CD4-positive, alpha-beta memory T cell (primary cell): ENCODE measurements at regions of chr19 and their contacts with region 1.

Region 1: GRCh38 chr19:42325273-42325895 is at the start of gene MEGF8:
- DNase-seq: peak; percentile 97 to 99 (median 99)
- H3K4me3 ChIP-seq: peak within 1 kb of the TSS; percentile 66 to 90
- H3K4me3 Mint-ChIP-seq: peak within 1 kb of the TSS; percentile 89 to 95 (median 92)
- H3K27ac ChIP-seq: peak within 1 kb of the TSS; percentile 81
- H3K27ac Mint-ChIP-seq: peak within 1 kb of the TSS; percentile 85 to 91 (median 90)
- H3K4me1 ChIP-seq: peaks cover 19% of the 10 kb centered on the region
- H3K4me1 Mint-ChIP-seq: peaks cover 7 to 31% (median 20%) of the 10 kb centered on the region in 4 donors
- H3K27me3 ChIP-seq: no peaks in the 10 kb centered on the region
- H3K27me3 Mint-ChIP-seq: peaks cover 5 to 12% of the 10 kb centered on the region in 2 donors
- total RNA-seq, gene MEGF8: 8.6 to 9.5 TPM

Region 2: DNA sequence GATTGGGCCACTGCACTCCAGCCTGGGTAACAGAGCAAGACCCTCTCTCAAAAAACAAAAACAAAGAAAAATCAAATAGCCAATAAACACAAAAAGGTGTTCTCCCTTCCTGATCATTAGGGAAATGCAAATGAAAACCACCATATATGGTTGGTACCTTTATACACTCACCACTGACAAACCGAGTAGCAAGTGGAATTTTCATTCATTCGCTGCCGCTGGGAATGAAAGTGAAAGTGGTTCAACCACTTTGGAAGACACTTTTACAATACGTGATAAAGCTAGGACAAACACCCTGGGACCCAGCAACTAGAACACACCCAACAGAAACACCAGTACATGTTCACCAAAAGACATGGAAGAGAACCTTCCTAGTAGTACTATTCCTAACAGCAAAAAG is 276.4 kb before region 1 on chr19:
- CTCF ChIA-PET with region 1: no interaction called
- POLR2A ChIA-PET with region 1: no interaction called
- intact Hi-C with region 1: no loop called
- DNase-seq: peak in 1 of 5 donors; percentile 13
- H3K4me3 ChIP-seq: no peak overlapping the region
- H3K4me3 Mint-ChIP-seq: peak overlapping the region; percentile 61 to 88 (median 74)
- H3K27ac ChIP-seq: no peak overlapping the region
- H3K27ac Mint-ChIP-seq: peak overlapping the region in 3 of 7 donors; percentile 33 to 89 (median 42)
- H3K4me1 ChIP-seq: no peaks in the 10 kb centered on the region
- H3K4me1 Mint-ChIP-seq: peaks cover 7 to 11% (median 7%) of the 10 kb centered on the region in 4 donors
- H3K27me3 ChIP-seq: no peaks in the 10 kb centered on the region
- H3K27me3 Mint-ChIP-seq: peaks cover 1 to 4% of the 10 kb centered on the region in 2 donors

Region 3: DNA sequence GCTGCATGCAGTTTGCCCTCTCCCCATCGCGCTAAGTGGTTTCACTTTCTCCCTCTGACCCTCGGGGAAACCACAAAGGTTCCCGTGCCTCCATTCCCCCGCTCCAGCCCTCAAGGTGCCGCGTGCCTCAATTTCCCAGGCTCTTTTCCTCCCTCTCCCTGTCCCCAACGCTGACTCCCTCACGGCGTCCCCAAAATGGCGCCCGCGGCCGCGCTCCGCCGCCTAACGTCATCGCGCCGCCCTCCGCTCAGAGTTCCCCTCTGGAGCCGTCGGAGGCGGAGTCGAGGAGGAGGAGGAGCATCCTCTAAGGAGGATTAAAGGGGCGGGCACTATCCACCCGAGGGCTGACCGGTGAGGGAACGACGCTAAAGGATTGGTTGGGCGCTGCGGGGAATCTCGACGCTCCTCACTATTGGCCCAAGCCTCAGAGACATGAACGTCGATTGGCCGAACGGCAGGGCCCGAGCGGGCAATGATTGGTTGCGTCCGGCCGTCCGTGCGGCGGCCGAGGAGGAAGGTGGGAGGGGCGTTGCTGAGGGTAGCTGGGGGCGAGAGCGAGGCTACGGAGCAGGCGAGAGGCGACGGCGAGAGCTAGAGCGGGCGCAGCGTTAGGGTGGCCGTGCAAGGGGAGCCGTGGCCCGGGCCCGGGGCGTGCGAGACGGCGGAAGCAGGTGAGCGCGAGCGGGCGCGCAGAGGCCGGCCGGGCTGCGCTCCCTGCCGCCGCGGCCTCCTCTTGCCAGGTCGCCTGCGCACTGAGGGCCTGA is 249.6 kb before region 1 on chr19 and contains the start of gene ZNF574:
- CTCF ChIA-PET with region 1: no interaction called
- POLR2A ChIA-PET with region 1: no interaction called
- intact Hi-C with region 1: loop called (anchors 1 kb)
- DNase-seq: peak; percentile 96 to 99 (median 99)
- H3K4me3 ChIP-seq: peak within 1 kb of the TSS; percentile 66 to 86
- H3K4me3 Mint-ChIP-seq: peak within 1 kb of the TSS; percentile 92 to 100 (median 98)
- H3K27ac ChIP-seq: peak within 1 kb of the TSS; percentile 95
- H3K27ac Mint-ChIP-seq: peak within 1 kb of the TSS; percentile 97 to 100 (median 100)
- H3K4me1 ChIP-seq: peaks cover 24% of the 10 kb centered on the region
- H3K4me1 Mint-ChIP-seq: peaks cover 29 to 38% (median 34%) of the 10 kb centered on the region in 4 donors
- H3K27me3 ChIP-seq: no peaks in the 10 kb centered on the region
- H3K27me3 Mint-ChIP-seq: no peaks in the 10 kb centered on the region
- total RNA-seq, gene ZNF574: 25.1 to 26.0 TPM

Region 4: DNA sequence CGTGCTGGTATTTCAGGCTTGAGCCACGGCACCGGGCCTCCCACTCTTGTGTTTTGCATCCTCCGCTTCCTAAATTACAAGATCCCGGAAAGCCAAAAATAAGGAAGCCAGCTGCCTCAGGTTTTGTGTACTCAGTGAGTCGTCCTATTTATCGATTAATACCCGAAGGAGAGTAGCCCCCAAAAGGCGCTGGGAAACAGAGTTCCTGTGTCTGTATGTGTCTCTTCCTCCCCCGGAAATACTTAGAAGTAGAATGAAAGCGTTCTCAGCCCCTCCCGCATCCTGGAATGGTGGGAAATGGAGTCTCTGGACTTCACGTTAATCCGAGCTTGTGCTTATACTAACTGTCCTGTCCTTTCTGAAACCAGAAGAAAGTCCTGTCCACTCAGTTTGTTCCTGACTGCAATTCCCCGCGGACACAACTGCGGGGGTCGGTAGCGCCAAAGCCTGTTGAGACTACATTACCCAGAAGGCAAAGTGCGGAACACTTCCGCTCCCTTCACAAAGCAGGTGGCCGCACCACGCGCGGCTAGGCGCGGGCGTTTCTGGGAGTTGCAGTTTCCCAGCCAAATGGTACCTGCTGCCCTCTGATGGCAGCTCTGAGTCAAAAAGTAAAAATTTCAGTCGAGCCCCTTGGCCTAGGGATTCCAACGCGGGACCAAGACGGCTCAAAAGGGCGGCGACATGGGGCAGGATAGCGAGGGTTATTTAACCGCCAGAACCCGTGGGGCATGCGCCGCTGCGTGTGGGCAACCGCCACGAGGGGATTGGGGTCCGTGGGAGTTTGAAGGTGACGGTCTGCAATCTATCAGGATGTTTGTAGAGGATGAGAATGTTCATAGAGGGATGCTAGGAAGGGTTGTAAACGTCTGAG is 80.8 kb before region 1 on chr19:
- CTCF ChIA-PET with region 1: no interaction called
- POLR2A ChIA-PET with region 1: interaction called, 3 read pairs
- intact Hi-C with region 1: loop called (anchors 1 kb)
- DNase-seq: peak; percentile 89 to 95 (median 91)
- H3K4me3 ChIP-seq: peak overlapping the region; percentile 53 to 89
- H3K4me3 Mint-ChIP-seq: peak overlapping the region; percentile 94 to 99 (median 97)
- H3K27ac ChIP-seq: peak overlapping the region; percentile 89
- H3K27ac Mint-ChIP-seq: peak overlapping the region; percentile 77 to 99 (median 99)
- H3K4me1 ChIP-seq: peaks cover 47% of the 10 kb centered on the region
- H3K4me1 Mint-ChIP-seq: peaks cover 26 to 62% (median 44%) of the 10 kb centered on the region in 4 donors
- H3K27me3 ChIP-seq: no peaks in the 10 kb centered on the region
- H3K27me3 Mint-ChIP-seq: no peaks in the 10 kb centered on the region

Region 5: GRCh38 chr19:42268704-42269477 is 56.5 kb before region 1 on chr19 and contains the start of gene CIC:
- CTCF ChIA-PET with region 1: interaction called, 4 read pairs
- POLR2A ChIA-PET with region 1: no interaction called
- intact Hi-C with region 1: loop called (anchors 1 kb)
- DNase-seq: peak; percentile 100
- H3K4me3 ChIP-seq: peak within 1 kb of the TSS; percentile 83 to 96
- H3K4me3 Mint-ChIP-seq: peak within 1 kb of the TSS in 4 of 8 donors; percentile 89 to 94 (median 92)
- H3K27ac ChIP-seq: peak within 1 kb of the TSS; percentile 99
- H3K27ac Mint-ChIP-seq: peak within 1 kb of the TSS in 4 of 7 donors; percentile 96 to 99 (median 98)
- H3K4me1 ChIP-seq: peaks cover 33% of the 10 kb centered on the region
- H3K4me1 Mint-ChIP-seq: peaks cover 0 to 29% (median 26%) of the 10 kb centered on the region in 4 donors
- H3K27me3 ChIP-seq: no peaks in the 10 kb centered on the region
- H3K27me3 Mint-ChIP-seq: no peaks in the 10 kb centered on the region
- total RNA-seq, gene CIC: 81.6 to 82.6 TPM

Region 6: GRCh38 chr19:42295831-42296525 is 29.4 kb before region 1 on chr19:
- CTCF ChIA-PET with region 1: interaction called, 10 read pairs
- POLR2A ChIA-PET with region 1: no interaction called
- intact Hi-C with region 1: no loop called
- DNase-seq: peak; percentile 78 to 89 (median 85)
- H3K4me3 ChIP-seq: no peak overlapping the region
- H3K4me3 Mint-ChIP-seq: peak overlapping the region in 1 of 8 donors; percentile 25
- H3K27ac ChIP-seq: peak overlapping the region; percentile 11
- H3K27ac Mint-ChIP-seq: peak overlapping the region in 6 of 7 donors; percentile 17 to 79 (median 73)
- H3K4me1 ChIP-seq: peaks cover 8% of the 10 kb centered on the region
- H3K4me1 Mint-ChIP-seq: peaks cover 3 to 22% (median 12%) of the 10 kb centered on the region in 4 donors
- H3K27me3 ChIP-seq: no peaks in the 10 kb centered on the region
- H3K27me3 Mint-ChIP-seq: no peaks in the 10 kb centered on the region

Region 7: DNA sequence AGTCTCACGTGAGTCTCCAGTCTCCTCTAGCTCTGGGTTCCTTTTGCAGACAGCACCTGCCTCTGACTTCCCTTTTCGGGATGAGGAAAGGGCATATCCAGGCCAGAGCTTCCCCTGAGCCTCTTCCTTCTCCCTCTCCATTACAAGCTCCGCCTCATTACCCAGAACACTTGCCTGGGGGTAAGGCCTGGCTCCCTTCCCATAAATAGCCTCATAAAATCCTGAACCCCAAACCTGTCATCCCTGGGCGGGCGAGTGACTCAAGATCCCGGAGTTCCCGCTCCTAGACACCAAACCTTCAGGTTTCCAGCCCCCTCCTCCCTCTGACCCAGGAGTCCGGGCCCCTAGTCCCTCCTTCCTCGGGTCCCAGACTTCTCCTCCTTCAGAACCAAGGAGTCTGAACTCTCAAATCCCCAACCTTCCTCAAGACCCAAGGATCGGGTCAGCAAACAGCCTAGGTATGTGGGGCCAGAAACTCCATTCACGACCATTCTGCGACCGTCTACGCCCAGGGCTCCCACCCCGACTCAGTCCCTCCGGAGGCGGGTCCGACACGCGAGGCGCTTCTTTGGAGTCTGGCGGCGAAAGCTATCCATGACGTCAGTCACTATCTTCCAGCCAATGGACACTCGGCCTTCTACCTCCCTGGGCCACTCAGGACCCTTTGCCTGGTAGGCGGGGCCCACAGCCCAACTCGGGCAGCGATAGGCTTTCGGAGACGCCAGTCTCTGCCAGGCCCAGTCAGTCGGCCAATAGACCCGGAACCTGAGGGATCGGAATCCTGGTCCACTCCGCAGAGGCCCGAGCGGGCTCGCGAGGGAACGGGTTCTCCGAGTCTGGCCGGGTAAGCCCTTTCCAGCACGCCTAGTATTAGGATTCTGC is 71.2 kb after region 1 on chr19:
- CTCF ChIA-PET with region 1: no interaction called
- POLR2A ChIA-PET with region 1: no interaction called
- intact Hi-C with region 1: loop called (anchors 2 kb)
- DNase-seq: peak; percentile 88 to 93 (median 90)
- H3K4me3 ChIP-seq: peak overlapping the region; percentile 87 to 97
- H3K4me3 Mint-ChIP-seq: peak overlapping the region; percentile 88 to 96 (median 92)
- H3K27ac ChIP-seq: peak overlapping the region; percentile 72
- H3K27ac Mint-ChIP-seq: peak overlapping the region; percentile 77 to 98 (median 96)
- H3K4me1 ChIP-seq: peaks cover 28% of the 10 kb centered on the region
- H3K4me1 Mint-ChIP-seq: peaks cover 26 to 47% (median 40%) of the 10 kb centered on the region in 4 donors
- H3K27me3 ChIP-seq: no peaks in the 10 kb centered on the region
- H3K27me3 Mint-ChIP-seq: peaks cover 0 to 3% of the 10 kb centered on the region in 2 donors

Region 8: GRCh38 chr19:42433503-42434260 is 108.3 kb after region 1 on chr19:
- CTCF ChIA-PET with region 1: interaction called, 5 read pairs
- POLR2A ChIA-PET with region 1: no interaction called
- intact Hi-C with region 1: loop called (anchors 1 kb)
- DNase-seq: peak; percentile 58 to 70 (median 62)
- H3K4me3 ChIP-seq: no peak overlapping the region
- H3K4me3 Mint-ChIP-seq: no peak overlapping the region
- H3K27ac ChIP-seq: no peak overlapping the region
- H3K27ac Mint-ChIP-seq: peak overlapping the region in 3 of 7 donors; percentile 35 to 57 (median 42)
- H3K4me1 ChIP-seq: peaks cover 3% of the 10 kb centered on the region
- H3K4me1 Mint-ChIP-seq: peaks cover 3 to 6% (median 5%) of the 10 kb centered on the region in 4 donors
- H3K27me3 ChIP-seq: no peaks in the 10 kb centered on the region
- H3K27me3 Mint-ChIP-seq: no peaks in the 10 kb centered on the region